ENCODE measurements at regions of chr14 and their contacts with region 1.

Region 1: DNA sequence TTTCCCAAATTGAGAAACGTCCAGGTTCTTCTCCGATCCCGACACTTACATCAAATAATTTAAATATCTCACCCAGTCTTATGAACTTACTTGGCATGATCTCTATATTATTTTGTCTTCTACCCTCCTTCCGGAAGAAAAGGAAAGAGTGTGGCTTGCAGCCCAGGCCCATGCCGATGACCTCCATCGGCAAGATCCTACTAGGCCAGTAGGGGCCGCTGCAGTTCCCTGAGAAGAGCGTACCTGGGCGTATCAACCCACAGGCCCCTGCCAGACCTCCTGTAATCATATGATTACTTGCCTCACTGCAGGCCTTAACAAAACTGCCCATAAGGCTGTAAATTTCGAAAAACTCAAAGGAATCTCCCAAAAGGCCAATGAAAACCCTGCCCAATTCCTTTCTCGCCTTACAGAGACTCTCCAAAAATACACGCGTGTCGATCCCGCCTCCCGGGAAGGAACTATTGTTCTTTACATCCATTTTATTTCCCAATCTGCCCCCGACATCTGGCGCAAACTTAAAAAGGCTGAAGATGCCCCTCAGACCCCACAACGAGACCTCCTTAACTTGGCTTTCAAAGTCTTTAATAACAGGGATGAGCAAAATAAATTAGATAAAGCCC is 69.6 kb downstream of the MOK start:
- DNase-seq: peak; percentile 55 to 91
- H3K4me3 ChIP-seq: no peak overlapping the region
- CTCF ChIP-seq: peak in 1 of 3 donors; percentile 14
- POLR2A ChIP-seq: no peak

Region 2: DNA sequence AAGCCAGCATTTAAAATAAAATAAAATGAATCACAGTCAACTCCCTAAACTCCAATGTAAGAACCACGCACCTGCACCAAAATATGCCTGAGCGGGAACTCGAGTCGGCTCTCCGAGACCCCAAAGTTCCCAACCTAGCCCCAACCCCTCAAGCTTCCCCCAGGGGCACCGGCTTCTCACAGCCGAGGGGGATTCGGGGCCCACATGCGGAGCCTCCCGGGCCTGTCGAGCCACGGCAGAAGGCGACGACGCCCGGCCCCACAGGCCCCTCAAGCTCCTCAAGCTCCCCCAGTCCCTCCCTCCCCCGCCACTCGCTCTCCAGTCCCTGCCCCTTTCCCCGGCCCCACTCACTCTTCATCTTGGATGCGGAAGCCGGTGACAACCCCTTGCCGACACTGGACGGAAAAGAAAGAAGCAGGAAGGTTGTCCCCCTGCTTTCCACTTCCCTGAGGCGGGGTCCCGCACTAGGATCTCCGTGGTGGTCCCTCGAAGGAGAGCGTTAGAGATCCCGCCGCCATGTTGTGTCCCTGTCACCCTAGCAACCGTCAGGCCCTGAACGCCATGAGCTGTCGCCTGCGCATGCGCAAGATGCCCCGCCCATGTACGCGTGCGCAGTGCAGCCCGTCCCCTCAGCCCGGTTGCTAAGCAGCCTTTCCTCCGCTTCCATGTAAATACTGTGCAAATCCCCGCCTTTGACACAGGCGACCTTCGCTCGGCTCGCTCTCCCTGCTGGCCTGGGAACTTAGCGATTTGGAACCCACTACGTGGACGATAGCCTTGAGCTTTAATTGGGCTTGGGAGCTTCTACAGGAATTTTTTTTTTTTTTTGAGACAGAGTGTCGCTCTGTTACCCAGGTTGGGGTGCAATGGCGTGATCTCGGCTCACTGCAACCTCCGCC is 69.5 kb after region 1 on chr14 and contains the start of gene MOK:
- intact Hi-C with region 1: loop called (anchors 10 kb)
- DNase-seq: peak; percentile 94 to 99
- H3K4me3 ChIP-seq: peak within 1 kb of the TSS; percentile 51
- CTCF ChIP-seq: no peak
- POLR2A ChIP-seq: no peak
- total RNA-seq, gene MOK: 2.1 to 12.2 (median 7.8) TPM

Region 3: GRCh38 chr14:102509744-102510615 is 274.6 kb after region 1 on chr14 and contains the start of gene ANKRD9:
- intact Hi-C with region 1: loop called (anchors 10 kb)
- DNase-seq: peak; percentile 91 to 99
- H3K4me3 ChIP-seq: peak within 1 kb of the TSS; percentile 32
- CTCF ChIP-seq: no peak
- POLR2A ChIP-seq: no peak
- total RNA-seq, gene ANKRD9: 64.6 to 135 (median 69.4) TPM